Colonic mucosa (tissue), 4 donors: ENCODE measurements at regions of chrX and their contacts with region 1.

Region 1: DNA sequence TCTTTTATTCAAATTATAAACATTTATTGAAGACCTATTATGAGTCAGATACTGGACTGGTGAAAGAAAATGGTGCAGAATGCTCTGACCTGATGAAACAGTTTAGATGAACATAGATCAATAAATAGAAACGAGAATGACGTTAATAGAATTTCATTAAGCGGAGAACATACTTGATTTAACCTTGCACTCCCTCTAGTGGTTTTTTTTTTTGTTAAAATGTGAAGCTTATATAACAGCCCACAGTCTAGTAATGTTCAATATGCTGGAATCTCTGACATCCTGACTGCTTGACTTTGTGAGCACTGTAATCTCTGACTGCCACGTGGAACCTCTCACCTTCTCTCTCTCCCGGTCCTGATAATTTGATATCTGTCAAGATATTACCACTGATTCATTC is 32.3 kb downstream of the HDAC8 start:
- DNase-seq: no peak
- H3K4me3 ChIP-seq: no peak overlapping the region
- H3K27ac ChIP-seq: no peak overlapping the region
- H3K4me1 ChIP-seq: no peaks in the 10 kb centered on the region
- H3K27me3 ChIP-seq: no peaks in the 10 kb centered on the region
- CTCF ChIP-seq: no peak

Region 2: GRCh38 chrX:72088761-72089160 is 451.6 kb before region 1 on chrX:
- intact Hi-C with region 1: no loop called
- DNase-seq: no peak
- H3K4me3 ChIP-seq: no peak overlapping the region
- H3K27ac ChIP-seq: no peak overlapping the region
- H3K4me1 ChIP-seq: no peaks in the 10 kb centered on the region
- H3K27me3 ChIP-seq: no peaks in the 10 kb centered on the region
- CTCF ChIP-seq: no peak

Region 3: DNA sequence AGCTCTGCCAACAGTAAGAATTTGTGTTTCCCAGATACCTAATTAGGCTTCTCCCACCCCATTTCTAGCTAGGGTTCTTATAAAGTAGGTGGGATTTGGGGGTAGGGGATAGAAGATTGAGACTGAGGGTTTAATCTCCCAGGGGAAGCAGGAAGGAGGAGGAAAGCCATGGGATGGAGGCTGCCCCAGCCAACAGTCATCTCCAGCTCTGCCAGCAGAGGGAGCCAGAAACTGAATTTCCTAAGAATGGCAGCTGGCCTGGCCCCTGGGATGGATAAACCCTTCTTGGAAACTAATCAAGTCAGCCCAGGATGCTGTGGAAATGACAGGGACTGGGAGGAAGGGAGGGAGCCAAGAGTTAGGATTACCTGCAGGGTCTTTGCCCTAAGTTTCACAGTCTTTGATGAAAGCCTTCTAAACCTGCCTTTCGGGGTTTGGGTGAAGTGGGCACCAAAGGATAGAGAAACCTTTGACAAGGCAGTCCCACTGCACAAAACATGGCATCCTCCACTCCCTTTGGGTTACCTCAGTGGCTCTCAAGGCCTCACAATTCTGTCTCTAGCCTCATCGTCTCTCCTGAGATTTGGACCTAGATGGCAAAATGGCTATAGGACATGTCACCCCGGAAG is 294.7 kb before region 1 on chrX:
- intact Hi-C with region 1: loop called (anchors 5 kb)
- DNase-seq: peak; percentile 79
- H3K4me3 ChIP-seq: no peak overlapping the region
- H3K27ac ChIP-seq: no peak overlapping the region
- H3K4me1 ChIP-seq: no peaks in the 10 kb centered on the region
- H3K27me3 ChIP-seq: no peaks in the 10 kb centered on the region
- CTCF ChIP-seq: peak; percentile 79

Region 4: GRCh38 chrX:72297953-72298730 is 242.2 kb before region 1 on chrX:
- intact Hi-C with region 1: loop called (anchors 5 kb)
- DNase-seq: no peak
- H3K4me3 ChIP-seq: no peak overlapping the region
- H3K27ac ChIP-seq: no peak overlapping the region
- H3K4me1 ChIP-seq: no peaks in the 10 kb centered on the region
- H3K27me3 ChIP-seq: peaks cover 20% of the 10 kb centered on the region
- CTCF ChIP-seq: peak; percentile 31